ENCODE measurements at regions of chr18 and their contacts with region 1.

Region 1: DNA sequence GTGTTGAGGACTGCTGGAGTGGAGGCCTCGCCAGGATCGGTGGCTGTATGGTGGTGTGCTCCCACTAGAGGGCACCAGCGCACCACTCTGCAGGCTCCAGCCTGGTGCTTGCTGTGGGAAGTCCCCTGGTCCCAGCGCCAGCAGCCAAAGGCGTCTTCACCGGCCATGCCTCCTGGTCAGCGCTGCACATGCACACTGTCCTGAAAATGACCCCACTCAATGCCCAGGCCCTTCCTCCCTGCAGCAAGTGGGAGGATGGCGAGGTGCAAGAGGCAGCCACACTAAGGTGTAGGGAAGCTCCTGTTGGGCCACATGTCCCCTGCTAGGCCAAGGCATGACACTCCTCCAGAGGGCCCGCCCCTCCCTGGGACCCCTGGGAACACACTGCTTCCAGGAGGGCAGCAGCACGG is 136.5 kb downstream of the CTIF start:
- DNase-seq: peak; percentile 58
- ATAC-seq: peak; percentile 96
- H3K4me3 ChIP-seq: no peak overlapping the region
- H3K27ac ChIP-seq: no peak overlapping the region
- H3K4me1 ChIP-seq: peaks cover 39% of the 10 kb centered on the region
- H3K27me3 ChIP-seq: no peaks in the 10 kb centered on the region
- CTCF ChIP-seq: peak; percentile 99
- EP300 ChIP-seq: no peak
- POLR2A ChIP-seq: no peak
- RAD21 ChIP-seq: peak; percentile 97

Region 2: GRCh38 chr18:48663931-48664847 is 11.2 kb before region 1 on chr18:
- CTCF ChIA-PET with region 1: no interaction called
- POLR2A ChIA-PET with region 1: no interaction called
- in situ Hi-C with region 1: no loop called
- intact Hi-C with region 1: no loop called
- DNase-seq: peak; percentile 42
- ATAC-seq: peak; percentile 65
- H3K4me3 ChIP-seq: no peak overlapping the region
- H3K27ac ChIP-seq: no peak overlapping the region
- H3K4me1 ChIP-seq: peaks cover 17% of the 10 kb centered on the region
- H3K27me3 ChIP-seq: no peaks in the 10 kb centered on the region
- CTCF ChIP-seq: peak; percentile 96
- EP300 ChIP-seq: no peak
- POLR2A ChIP-seq: no peak
- RAD21 ChIP-seq: peak; percentile 86

Region 3: GRCh38 chr18:48781163-48781987 is 106.0 kb after region 1 on chr18:
- CTCF ChIA-PET with region 1: no interaction called
- POLR2A ChIA-PET with region 1: no interaction called
- in situ Hi-C with region 1: no loop called
- intact Hi-C with region 1: loop called (anchors 10 kb)
- DNase-seq: peak; percentile 92
- ATAC-seq: peak; percentile 87
- H3K4me3 ChIP-seq: peak overlapping the region; percentile 45 to 71 (median 46)
- H3K27ac ChIP-seq: peak overlapping the region; percentile 98
- H3K4me1 ChIP-seq: peaks cover 55% of the 10 kb centered on the region
- H3K27me3 ChIP-seq: no peaks in the 10 kb centered on the region
- CTCF ChIP-seq: peak; percentile 11; the same call in 1 of the 2 replicates
- EP300 ChIP-seq: peak; percentile 50 to 74; a peak in 2 of 4 replicates
- POLR2A ChIP-seq: peak; percentile 57 to 65; a peak in 2 of 4 replicates
- RAD21 ChIP-seq: peak; percentile 43; the same call in 1 of the 2 replicates

Region 4: DNA sequence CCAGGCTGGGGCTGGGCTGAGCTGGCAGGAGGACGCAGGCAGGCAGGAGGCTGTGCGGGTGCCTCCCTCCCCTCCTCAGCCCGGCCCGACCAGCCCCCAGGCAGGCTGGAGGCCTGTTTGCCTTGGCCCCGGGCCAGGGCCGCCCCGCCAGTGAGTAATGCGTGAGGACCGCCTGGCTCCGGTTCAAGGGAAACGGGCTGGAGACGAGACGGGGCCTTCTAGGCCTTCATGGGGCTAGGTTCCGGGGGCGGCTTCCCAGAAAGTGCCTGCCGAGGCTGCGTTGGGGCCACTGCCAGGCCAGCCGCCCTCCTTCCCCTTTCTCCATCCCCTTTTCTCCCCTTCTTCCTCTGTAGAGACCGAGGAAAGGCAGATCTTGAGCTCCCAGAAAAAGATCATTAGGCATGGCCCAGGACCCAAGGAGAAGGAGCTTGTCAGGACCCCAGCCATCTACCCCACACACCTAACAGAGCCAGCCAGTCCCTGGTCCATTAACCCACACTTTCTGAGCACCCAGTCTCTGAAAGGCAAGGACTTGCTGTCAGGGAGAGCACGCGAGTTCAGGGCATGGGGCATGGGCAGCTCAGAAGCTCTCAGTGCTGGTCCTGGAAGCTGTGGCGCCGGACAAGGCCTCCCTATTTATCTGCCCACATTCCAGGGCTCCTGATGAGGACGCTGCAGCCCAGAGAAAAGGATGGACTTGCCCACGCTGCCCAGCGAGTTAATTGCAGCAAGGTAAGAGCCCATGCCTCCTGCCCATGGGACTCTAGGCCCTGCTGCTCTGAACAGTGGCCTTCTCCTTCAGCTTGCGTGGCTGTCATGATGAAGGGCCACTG is 226.9 kb after region 1 on chr18:
- CTCF ChIA-PET with region 1: interaction called, 3 read pairs
- POLR2A ChIA-PET with region 1: no interaction called
- in situ Hi-C with region 1: loop called (anchors 5 kb)
- intact Hi-C with region 1: loop called (anchors 5 kb)
- DNase-seq: peak; percentile 86
- ATAC-seq: peak; percentile 89
- H3K4me3 ChIP-seq: peak overlapping the region; percentile 51 to 73 (median 57); a peak in 5 of 6 replicates
- H3K27ac ChIP-seq: peak overlapping the region; percentile 78
- H3K4me1 ChIP-seq: peaks cover 48% of the 10 kb centered on the region
- H3K27me3 ChIP-seq: no peaks in the 10 kb centered on the region
- CTCF ChIP-seq: peak; percentile 65
- EP300 ChIP-seq: peak in 1 of 2 experiments; percentile 85; a peak in 2 of 4 replicates
- POLR2A ChIP-seq: peak in 1 of 2 experiments; percentile 52; a peak in 2 of 4 replicates
- RAD21 ChIP-seq: no peak

Region 5: DNA sequence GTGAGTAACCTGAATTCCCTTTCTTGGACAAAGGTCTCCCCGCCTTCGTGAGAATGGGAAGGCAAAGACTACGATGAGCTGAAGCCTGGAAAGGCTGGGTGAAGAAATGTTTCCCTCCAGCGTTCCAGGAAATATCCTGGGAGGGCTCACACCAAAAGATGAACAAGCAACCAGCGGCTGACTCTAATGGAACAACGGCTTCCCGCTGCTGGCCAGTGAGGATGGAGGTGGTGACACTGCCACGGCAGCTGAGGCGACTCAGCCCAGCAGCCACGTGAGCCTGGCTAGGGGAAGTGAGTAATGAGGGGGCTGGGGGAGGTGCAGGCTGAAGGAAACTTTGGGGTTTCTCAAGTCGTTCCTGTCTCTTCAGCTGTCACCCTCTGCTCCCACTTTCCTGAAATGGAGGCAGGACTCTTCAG is 380.4 kb after region 1 on chr18:
- CTCF ChIA-PET with region 1: no interaction called
- POLR2A ChIA-PET with region 1: no interaction called
- in situ Hi-C with region 1: loop called (anchors 10 kb)
- intact Hi-C with region 1: no loop called
- DNase-seq: no peak
- ATAC-seq: no peak
- H3K4me3 ChIP-seq: no peak overlapping the region
- H3K27ac ChIP-seq: no peak overlapping the region
- H3K4me1 ChIP-seq: no peaks in the 10 kb centered on the region
- H3K27me3 ChIP-seq: no peaks in the 10 kb centered on the region
- CTCF ChIP-seq: no peak
- EP300 ChIP-seq: no peak
- POLR2A ChIP-seq: no peak
- RAD21 ChIP-seq: no peak

Region 6: GRCh38 chr18:49238433-49239042 is 563.2 kb after region 1 on chr18:
- CTCF ChIA-PET with region 1: interaction called, 5 read pairs
- POLR2A ChIA-PET with region 1: no interaction called
- in situ Hi-C with region 1: loop called (anchors 5 kb)
- intact Hi-C with region 1: loop called (anchors 5 kb)
- DNase-seq: peak; percentile 38
- ATAC-seq: no peak
- H3K4me3 ChIP-seq: no peak overlapping the region
- H3K27ac ChIP-seq: no peak overlapping the region
- H3K4me1 ChIP-seq: no peaks in the 10 kb centered on the region
- H3K27me3 ChIP-seq: no peaks in the 10 kb centered on the region
- CTCF ChIP-seq: peak; percentile 69
- EP300 ChIP-seq: no peak
- POLR2A ChIP-seq: no peak
- RAD21 ChIP-seq: no peak; the same call in 1 of the 2 replicates